ENCODE measurements at regions of chr19 and their contacts with region 1.

Region 1: DNA sequence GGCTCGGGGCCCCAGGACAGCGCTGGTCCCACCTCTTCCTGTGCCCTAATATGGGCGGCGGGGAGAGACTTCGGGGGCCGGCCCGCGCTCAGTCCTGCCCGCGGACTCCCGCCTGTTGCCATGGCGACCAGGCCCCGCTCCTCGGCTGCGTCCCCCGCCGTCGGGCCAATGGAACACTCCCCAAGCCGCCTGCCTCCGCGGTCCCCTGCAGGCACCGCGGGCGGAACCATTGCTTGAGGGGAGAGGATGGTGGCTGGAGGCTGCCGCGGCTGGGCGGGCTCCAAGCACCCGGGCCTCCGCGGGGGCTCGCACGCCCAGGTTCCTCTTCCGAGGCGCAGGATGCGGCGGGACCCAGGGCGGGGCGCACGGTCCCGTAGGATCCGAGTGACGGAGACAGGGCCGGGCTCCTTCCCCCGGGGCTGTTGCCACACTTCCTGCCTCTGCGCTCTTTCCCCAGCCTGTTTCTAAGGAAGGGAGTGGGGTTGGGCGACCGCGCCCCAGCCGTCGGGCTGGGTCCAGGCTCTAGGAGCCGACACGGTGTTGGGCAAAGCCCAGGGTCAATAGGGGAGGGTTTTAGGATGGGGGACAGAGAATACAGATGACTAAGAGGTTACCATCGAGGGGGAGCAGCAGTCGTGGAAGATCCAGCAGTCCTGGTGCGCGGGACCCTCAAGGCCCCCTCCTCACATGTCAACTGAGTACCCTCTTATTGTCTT is 1.2 kb upstream of the JUNB start:
- DNase-seq: peak; percentile 75
- H3K4me3 ChIP-seq: peak overlapping the region; percentile 94
- H3K27me3 ChIP-seq: no peaks in the 10 kb centered on the region
- CTCF ChIP-seq: no peak

Region 2: DNA sequence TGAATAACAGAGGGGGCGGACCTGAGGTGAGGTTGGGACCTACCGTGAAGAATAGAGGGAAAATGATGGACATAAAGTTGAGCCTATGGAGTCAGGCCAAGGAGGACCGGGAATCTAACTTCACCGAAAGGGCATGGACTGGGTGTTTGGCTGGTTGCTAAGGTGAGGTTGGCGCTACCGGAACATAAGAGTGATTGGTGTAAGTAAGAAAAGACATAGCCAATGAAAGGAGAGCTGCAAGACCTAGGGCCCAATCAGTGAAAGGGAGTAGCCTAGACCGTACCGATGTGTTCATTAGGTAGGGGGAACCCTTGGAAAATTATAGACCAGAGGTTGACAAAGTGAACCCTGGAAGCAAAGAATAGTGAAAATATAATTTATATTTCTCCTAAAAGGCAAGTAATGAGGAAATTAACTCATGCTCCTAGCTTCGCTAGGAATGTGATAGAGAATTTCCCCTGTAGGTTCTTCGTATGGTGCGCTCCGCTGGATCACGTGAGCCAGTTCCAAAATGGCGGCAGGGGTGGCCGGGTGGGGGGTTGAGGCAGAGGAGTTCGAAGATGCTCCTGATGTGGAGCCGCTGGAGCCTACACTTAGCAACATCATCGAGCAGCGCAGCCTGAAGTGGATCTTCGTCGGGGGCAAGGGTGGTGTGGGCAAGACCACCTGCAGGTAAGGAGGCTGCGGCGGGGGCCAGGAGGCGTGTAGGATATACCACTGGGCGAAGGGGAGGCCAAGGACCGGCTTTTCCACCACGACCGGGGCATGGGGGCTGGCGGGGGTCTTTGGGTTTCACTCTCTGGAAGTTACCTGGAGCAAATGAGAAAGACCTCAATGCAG is 52.8 kb before region 1 on chr19 and contains the start of gene GET3:
- CTCF ChIA-PET with region 1: no interaction called
- POLR2A ChIA-PET with region 1: interaction called, 16 read pairs
- DNase-seq: peak; percentile 100
- H3K4me3 ChIP-seq: peak within 1 kb of the TSS; percentile 87
- H3K27me3 ChIP-seq: no peaks in the 10 kb centered on the region
- CTCF ChIP-seq: no peak
- polyA plus RNA-seq, gene GET3: 163 and 250 TPM in 2 replicates

Region 3: GRCh38 chr19:12777217-12778016 is 12.6 kb before region 1 on chr19:
- CTCF ChIA-PET with region 1: interaction called, 874 read pairs
- POLR2A ChIA-PET with region 1: interaction called, 16 read pairs
- DNase-seq: no peak
- H3K4me3 ChIP-seq: peak overlapping the region; percentile 65
- H3K27me3 ChIP-seq: no peaks in the 10 kb centered on the region
- CTCF ChIP-seq: peak; percentile 99

Region 4: DNA sequence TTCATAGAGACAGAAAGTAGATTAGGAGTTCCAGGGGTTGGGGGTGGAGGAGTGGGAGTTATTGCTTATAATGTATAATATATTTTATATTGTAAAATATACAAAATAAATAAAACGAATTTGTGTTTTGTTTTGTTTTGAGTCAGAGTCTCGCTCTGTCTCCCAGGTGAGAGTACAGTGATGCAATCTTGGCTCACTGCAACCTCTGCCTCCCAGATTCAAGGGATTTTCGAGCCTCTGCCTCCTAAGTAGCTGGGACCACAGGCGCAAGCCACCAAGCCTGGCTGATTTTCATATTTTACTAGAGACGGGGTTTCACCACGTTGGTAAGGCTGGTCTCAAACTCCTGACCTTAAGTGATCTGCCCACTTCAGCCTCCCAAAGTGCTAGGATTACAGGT is 169.4 kb after region 1 on chr19:
- CTCF ChIA-PET with region 1: no interaction called
- POLR2A ChIA-PET with region 1: no interaction called
- DNase-seq: no peak
- H3K4me3 ChIP-seq: no peak overlapping the region
- H3K27me3 ChIP-seq: no peaks in the 10 kb centered on the region
- CTCF ChIP-seq: no peak

Measured in BJ (cell line).